ENCODE measurements at regions of chr1 and their contacts with region 1.

Region 1: GRCh38 chr1:36088575-36089443 is at the start of gene ADPRS:
- DNase-seq: peak; percentile 81 to 95 (median 88)
- ATAC-seq: peak; percentile 98
- H3K4me3 ChIP-seq: peak within 1 kb of the TSS; percentile 47
- H3K4me3 Mint-ChIP-seq: peak within 1 kb of the TSS; percentile 83 to 96 (median 93)
- H3K27ac ChIP-seq: peak within 1 kb of the TSS; percentile 98
- H3K27ac Mint-ChIP-seq: peak within 1 kb of the TSS; percentile 86 to 97 (median 90)
- H3K4me1 ChIP-seq: peaks cover 11 to 16% of the 10 kb centered on the region in 2 donors
- H3K4me1 Mint-ChIP-seq: peaks cover 12 to 30% (median 23%) of the 10 kb centered on the region in 7 donors
- H3K27me3 ChIP-seq: peaks cover 0 to 5% of the 10 kb centered on the region in 2 donors
- H3K27me3 Mint-ChIP-seq: peaks cover 10 to 18% (median 10%) of the 10 kb centered on the region in 5 donors
- total RNA-seq, gene ADPRS: 18.0 to 30.2 (median 24.2) TPM

Region 2: DNA sequence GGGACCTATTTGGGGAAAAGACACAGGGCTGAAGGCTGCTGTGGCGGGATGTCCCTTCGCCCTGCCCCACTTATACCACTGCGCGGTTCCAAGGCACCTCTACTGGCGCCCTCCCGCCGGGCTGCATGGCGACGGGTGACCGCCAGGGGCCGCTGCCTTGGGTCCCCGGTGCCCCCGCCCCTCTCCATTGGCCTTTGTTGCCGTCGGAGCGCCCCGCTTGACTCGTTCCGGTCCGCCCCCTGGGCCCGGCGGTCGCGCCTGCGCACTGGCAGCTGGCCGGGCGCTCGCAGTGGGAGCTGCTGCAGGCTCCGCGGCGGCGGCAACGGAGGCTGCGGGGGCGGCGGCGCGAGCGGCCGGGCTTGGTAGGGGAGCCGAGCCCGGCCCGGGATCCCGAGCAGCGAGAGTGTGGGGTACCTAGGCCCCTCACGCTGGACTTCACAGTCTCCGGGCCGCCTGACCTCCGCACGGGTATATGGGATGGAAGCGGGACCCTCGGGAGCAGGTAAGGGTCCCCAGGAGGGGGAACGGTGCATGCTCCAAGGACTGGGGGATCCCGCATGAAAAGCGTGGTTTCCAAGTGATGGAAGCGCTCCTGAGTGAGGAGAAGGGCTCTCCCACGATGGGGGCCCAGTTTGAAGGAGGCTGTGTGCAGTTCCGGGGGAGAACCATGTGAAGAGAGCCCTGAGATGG is 205.7 kb before region 1 on chr1 and contains the start of gene AGO1:
- CTCF ChIA-PET with region 1: no interaction called
- POLR2A ChIA-PET with region 1: no interaction called
- intact Hi-C with region 1: loop called (anchors 1 kb)
- DNase-seq: peak; percentile 94 to 99 (median 97)
- ATAC-seq: peak; percentile 100
- H3K4me3 ChIP-seq: peak within 1 kb of the TSS; percentile 100
- H3K4me3 Mint-ChIP-seq: peak within 1 kb of the TSS; percentile 90 to 98 (median 94)
- H3K27ac ChIP-seq: peak within 1 kb of the TSS; percentile 79
- H3K27ac Mint-ChIP-seq: peak within 1 kb of the TSS; percentile 72 to 92 (median 84)
- H3K4me1 ChIP-seq: peaks cover 9 to 24% of the 10 kb centered on the region in 2 donors
- H3K4me1 Mint-ChIP-seq: peaks cover 37 to 55% (median 51%) of the 10 kb centered on the region in 7 donors
- H3K27me3 ChIP-seq: no peaks in the 10 kb centered on the region
- H3K27me3 Mint-ChIP-seq: peaks cover 0 to 4% (median 0%) of the 10 kb centered on the region in 5 donors
- total RNA-seq, gene AGO1: 22.5 to 28.0 (median 26.9) TPM

Region 3: DNA sequence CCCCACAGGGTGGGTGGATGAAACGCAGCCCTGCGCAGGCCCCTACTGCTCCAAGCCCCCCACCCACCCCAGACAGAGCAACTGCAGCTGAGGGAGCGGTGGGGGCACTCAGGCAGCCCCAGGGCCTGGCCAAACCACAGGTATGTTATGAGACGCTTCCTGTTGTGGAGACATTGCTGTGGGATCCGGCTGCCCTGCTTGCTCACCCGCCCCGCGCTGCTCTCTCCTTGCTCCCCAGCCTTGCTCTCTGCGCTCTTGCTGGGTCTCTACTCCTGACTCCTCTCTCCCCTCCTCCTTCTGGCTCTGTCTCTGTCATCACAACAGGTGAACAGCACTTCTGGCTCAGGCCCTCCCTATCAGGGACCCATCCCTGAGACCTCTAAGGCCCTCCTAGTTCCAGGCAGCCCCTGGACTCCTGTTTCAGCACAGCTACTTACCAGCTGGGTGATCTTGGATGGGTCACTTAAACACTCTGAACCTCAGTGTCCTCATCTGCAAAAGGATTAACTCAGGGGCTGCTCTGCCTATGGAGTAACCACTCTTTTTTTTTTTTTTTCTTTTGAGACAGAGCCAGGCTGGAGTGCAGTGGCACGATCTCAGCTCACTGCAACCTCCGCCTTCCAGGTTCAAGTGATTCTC is 20.4 kb after region 1 on chr1:
- CTCF ChIA-PET with region 1: no interaction called
- POLR2A ChIA-PET with region 1: no interaction called
- intact Hi-C with region 1: loop called in 1 of 2 experiments (anchors 1 kb)
- DNase-seq: peak in 7 of 9 donors; percentile 42 to 67 (median 61)
- ATAC-seq: peak; percentile 92
- H3K4me3 ChIP-seq: no peak overlapping the region
- H3K4me3 Mint-ChIP-seq: peak overlapping the region in 9 of 10 donors; percentile 12 to 85 (median 68)
- H3K27ac ChIP-seq: peak overlapping the region; percentile 56
- H3K27ac Mint-ChIP-seq: peak overlapping the region; percentile 35 to 97 (median 80)
- H3K4me1 ChIP-seq: peaks cover 0 to 15% of the 10 kb centered on the region in 2 donors
- H3K4me1 Mint-ChIP-seq: peaks cover 21 to 38% (median 32%) of the 10 kb centered on the region in 7 donors
- H3K27me3 ChIP-seq: no peaks in the 10 kb centered on the region
- H3K27me3 Mint-ChIP-seq: no peaks in the 10 kb centered on the region

Region 4: GRCh38 chr1:36463803-36464604 is 375.2 kb after region 1 on chr1 and contains the start of gene MRPS15:
- CTCF ChIA-PET with region 1: no interaction called
- POLR2A ChIA-PET with region 1: no interaction called
- intact Hi-C with region 1: loop called in 1 of 2 experiments (anchors 1 kb)
- DNase-seq: peak; percentile 85 to 95 (median 93)
- ATAC-seq: peak; percentile 99
- H3K4me3 ChIP-seq: peak within 1 kb of the TSS; percentile 85
- H3K4me3 Mint-ChIP-seq: peak within 1 kb of the TSS; percentile 86 to 100 (median 97)
- H3K27ac ChIP-seq: peak within 1 kb of the TSS; percentile 91
- H3K27ac Mint-ChIP-seq: peak within 1 kb of the TSS; percentile 90 to 99 (median 98)
- H3K4me1 ChIP-seq: peaks cover 7 to 13% of the 10 kb centered on the region in 2 donors
- H3K4me1 Mint-ChIP-seq: peaks cover 18 to 54% (median 43%) of the 10 kb centered on the region in 7 donors
- H3K27me3 ChIP-seq: no peaks in the 10 kb centered on the region
- H3K27me3 Mint-ChIP-seq: no peaks in the 10 kb centered on the region
- total RNA-seq, gene MRPS15: 30.2 to 84.0 (median 36.3) TPM